ENCODE measurements at regions of chr7 and their contacts with region 1.

Region 1: GRCh38 chr7:6148724-6149360 is 117.7 kb downstream of the ANKRD61 start:
- DNase-seq: no peak
- ATAC-seq: no peak
- H3K4me3 ChIP-seq: no peak overlapping the region
- H3K27ac ChIP-seq: peak overlapping the region in 1 of 12 donors; percentile 70
- H3K4me1 ChIP-seq: no peaks in the 10 kb centered on the region
- H3K27me3 ChIP-seq: no peaks in the 10 kb centered on the region
- CTCF ChIP-seq: no peak
- POLR2A ChIP-seq: no peak

Region 2: GRCh38 chr7:6032167-6032566 is 116.7 kb before region 1 on chr7:
- intact Hi-C with region 1: loop called in 1 of 10 experiments (anchors 10 kb)
- DNase-seq: no peak
- ATAC-seq: no peak
- H3K4me3 ChIP-seq: no peak overlapping the region
- H3K27ac ChIP-seq: no peak overlapping the region
- H3K4me1 ChIP-seq: peaks cover 0 to 8% (median 0%) of the 10 kb centered on the region in 12 donors
- H3K27me3 ChIP-seq: no peaks in the 10 kb centered on the region
- CTCF ChIP-seq: no peak
- POLR2A ChIP-seq: no peak

Region 3: DNA sequence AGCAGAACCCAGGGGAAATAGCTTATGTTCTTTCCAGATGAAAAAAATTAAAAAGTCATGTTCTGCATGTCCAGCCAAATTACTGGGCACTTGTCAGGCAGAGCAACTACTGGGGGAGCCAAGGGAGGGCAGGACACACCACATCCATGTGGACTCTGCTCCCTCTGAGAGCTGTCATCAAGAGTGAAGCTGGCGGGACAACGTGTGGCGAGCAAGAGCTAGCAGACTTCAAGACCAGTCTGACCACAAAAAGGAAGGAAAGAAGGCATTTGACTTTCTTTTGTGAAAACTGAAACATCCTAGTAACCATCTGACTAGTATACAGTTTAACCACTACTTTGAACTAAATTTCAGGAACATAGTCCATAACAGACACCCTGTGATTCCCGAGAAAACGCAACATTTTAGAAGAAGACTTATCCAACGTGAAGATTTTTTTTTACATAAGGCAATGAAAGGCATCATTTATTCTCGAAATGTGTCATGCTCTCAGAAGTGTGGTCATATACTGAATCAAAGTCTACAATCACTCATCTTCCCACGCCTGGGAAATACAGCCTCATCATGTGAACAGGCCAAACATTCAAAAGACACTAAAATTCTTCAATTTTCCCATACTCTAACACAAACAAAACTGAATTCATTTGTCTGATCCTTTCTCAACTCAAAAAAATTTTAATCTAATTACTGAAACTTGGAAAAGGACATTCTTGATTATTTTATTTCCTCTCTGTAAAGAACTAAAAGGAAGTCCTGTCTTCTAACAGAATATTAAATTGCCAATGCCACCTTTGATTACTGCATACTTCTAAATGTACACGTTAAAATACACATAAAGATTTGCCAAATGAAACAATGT is 108.1 kb after region 1 on chr7:
- intact Hi-C with region 1: no loop called
- DNase-seq: peak; percentile 47 to 82 (median 71)
- ATAC-seq: peak; percentile 74 to 88 (median 74)
- H3K4me3 ChIP-seq: peak overlapping the region in 4 of 12 donors; percentile 3 to 12 (median 8)
- H3K27ac ChIP-seq: peak overlapping the region; percentile 25 to 86 (median 71)
- H3K4me1 ChIP-seq: peaks cover 13 to 94% (median 76%) of the 10 kb centered on the region in 12 donors
- H3K27me3 ChIP-seq: no peaks in the 10 kb centered on the region
- CTCF ChIP-seq: no peak
- POLR2A ChIP-seq: no peak